ENCODE measurements at regions of chr6 and their contacts with region 1.

Region 1: DNA sequence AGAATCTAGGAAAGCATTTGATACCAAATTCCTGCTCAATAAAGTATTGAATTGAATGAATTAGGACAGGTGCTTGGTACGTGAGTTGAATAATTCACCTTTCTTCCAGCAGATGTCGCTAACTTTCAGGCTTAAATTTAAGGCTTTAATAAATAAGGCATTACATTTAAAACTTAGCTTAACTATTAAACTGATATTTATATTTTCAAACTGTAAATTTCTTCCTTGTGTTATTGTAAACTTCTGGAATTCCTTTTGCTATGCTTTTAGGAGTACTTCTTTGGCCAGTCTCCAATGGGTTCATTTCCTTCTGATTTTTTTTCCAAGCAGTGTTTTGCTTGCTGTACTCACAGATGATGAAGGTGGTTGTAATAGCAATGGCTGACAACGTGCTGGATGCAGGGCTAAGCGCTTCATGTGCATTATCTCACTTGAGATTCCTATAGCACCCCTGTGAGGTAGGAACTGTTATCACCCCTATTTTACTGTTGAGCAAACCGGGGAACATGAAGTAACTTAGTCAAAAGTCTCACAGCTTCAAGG is 71.3 kb upstream of the SLC2A12 start:
- DNase-seq: peak; percentile 76
- H3K4me3 ChIP-seq: no peak overlapping the region
- H3K27ac ChIP-seq: no peak overlapping the region
- H3K4me1 ChIP-seq: no peaks in the 10 kb centered on the region
- H3K27me3 ChIP-seq: no peaks in the 10 kb centered on the region
- CTCF ChIP-seq: peak; percentile 38 to 42
- POLR2A ChIP-seq: no peak

Region 2: GRCh38 chr6:133945158-133945557 is 178.6 kb before region 1 on chr6:
- CTCF ChIA-PET with region 1: no interaction called
- POLR2A ChIA-PET with region 1: no interaction called
- dilution Hi-C with region 1: no loop called
- intact Hi-C with region 1: no loop called
- DNase-seq: no peak
- H3K4me3 ChIP-seq: no peak overlapping the region
- H3K27ac ChIP-seq: no peak overlapping the region
- H3K4me1 ChIP-seq: no peaks in the 10 kb centered on the region
- H3K27me3 ChIP-seq: peaks cover 19 to 20% of the 10 kb centered on the region in 2 experiments
- CTCF ChIP-seq: no peak
- POLR2A ChIP-seq: no peak

Region 3: GRCh38 chr6:134080171-134080795 is 43.5 kb before region 1 on chr6:
- CTCF ChIA-PET with region 1: no interaction called
- POLR2A ChIA-PET with region 1: no interaction called
- dilution Hi-C with region 1: no loop called
- intact Hi-C with region 1: no loop called
- DNase-seq: no peak
- H3K4me3 ChIP-seq: no peak overlapping the region
- H3K27ac ChIP-seq: no peak overlapping the region
- H3K4me1 ChIP-seq: peaks cover 10% of the 10 kb centered on the region
- H3K27me3 ChIP-seq: peaks cover 3 to 14% of the 10 kb centered on the region in 2 experiments
- CTCF ChIP-seq: no peak
- POLR2A ChIP-seq: no peak

Region 4: GRCh38 chr6:134111062-134111677 is 12.6 kb before region 1 on chr6:
- CTCF ChIA-PET with region 1: interaction called, 15 read pairs
- POLR2A ChIA-PET with region 1: no interaction called
- dilution Hi-C with region 1: no loop called
- intact Hi-C with region 1: no loop called
- DNase-seq: peak; percentile 59
- H3K4me3 ChIP-seq: no peak overlapping the region
- H3K27ac ChIP-seq: no peak overlapping the region
- H3K4me1 ChIP-seq: no peaks in the 10 kb centered on the region
- H3K27me3 ChIP-seq: peaks cover 3 to 6% of the 10 kb centered on the region in 2 experiments
- CTCF ChIP-seq: peak; percentile 81 to 85
- POLR2A ChIP-seq: no peak

Region 5: GRCh38 chr6:134145786-134146185 is 22.0 kb after region 1 on chr6:
- CTCF ChIA-PET with region 1: interaction called, 21 read pairs
- POLR2A ChIA-PET with region 1: no interaction called
- dilution Hi-C with region 1: no loop called
- intact Hi-C with region 1: no loop called
- DNase-seq: no peak
- H3K4me3 ChIP-seq: no peak overlapping the region
- H3K27ac ChIP-seq: no peak overlapping the region
- H3K4me1 ChIP-seq: no peaks in the 10 kb centered on the region
- H3K27me3 ChIP-seq: peaks cover 0 to 2% of the 10 kb centered on the region in 2 experiments
- CTCF ChIP-seq: no peak
- POLR2A ChIP-seq: no peak

Region 6: GRCh38 chr6:134299236-134299635 is 175.5 kb after region 1 on chr6:
- CTCF ChIA-PET with region 1: no interaction called
- POLR2A ChIA-PET with region 1: no interaction called
- dilution Hi-C with region 1: no loop called
- intact Hi-C with region 1: no loop called
- DNase-seq: peak; percentile 92
- H3K4me3 ChIP-seq: no peak overlapping the region
- H3K27ac ChIP-seq: peak overlapping the region; percentile 44
- H3K4me1 ChIP-seq: peaks cover 21% of the 10 kb centered on the region
- H3K27me3 ChIP-seq: no peaks in the 10 kb centered on the region
- CTCF ChIP-seq: no peak
- POLR2A ChIP-seq: no peak

Region 7: GRCh38 chr6:134882426-134883038 is 758.8 kb after region 1 on chr6:
- CTCF ChIA-PET with region 1: interaction called, 85 read pairs
- POLR2A ChIA-PET with region 1: no interaction called
- dilution Hi-C with region 1: no loop called
- intact Hi-C with region 1: loop called (anchors 1 kb)
- DNase-seq: peak; percentile 79
- H3K4me3 ChIP-seq: no peak overlapping the region
- H3K27ac ChIP-seq: peak overlapping the region; percentile 3
- H3K4me1 ChIP-seq: peaks cover 13% of the 10 kb centered on the region
- H3K27me3 ChIP-seq: no peaks in the 10 kb centered on the region
- CTCF ChIP-seq: peak; percentile 82
- POLR2A ChIP-seq: no peak

Region 8: GRCh38 chr6:135002229-135002844 is 878.6 kb after region 1 on chr6:
- CTCF ChIA-PET with region 1: interaction called, 13 read pairs
- POLR2A ChIA-PET with region 1: no interaction called
- dilution Hi-C with region 1: no loop called
- intact Hi-C with region 1: no loop called
- DNase-seq: peak; percentile 45
- H3K4me3 ChIP-seq: no peak overlapping the region
- H3K27ac ChIP-seq: no peak overlapping the region
- H3K4me1 ChIP-seq: no peaks in the 10 kb centered on the region
- H3K27me3 ChIP-seq: no peaks in the 10 kb centered on the region
- CTCF ChIP-seq: peak; percentile 36 to 38
- POLR2A ChIP-seq: no peak